MCF 10A (cell line): ENCODE measurements at regions of chr17 and their contacts with region 1.

Region 1: DNA sequence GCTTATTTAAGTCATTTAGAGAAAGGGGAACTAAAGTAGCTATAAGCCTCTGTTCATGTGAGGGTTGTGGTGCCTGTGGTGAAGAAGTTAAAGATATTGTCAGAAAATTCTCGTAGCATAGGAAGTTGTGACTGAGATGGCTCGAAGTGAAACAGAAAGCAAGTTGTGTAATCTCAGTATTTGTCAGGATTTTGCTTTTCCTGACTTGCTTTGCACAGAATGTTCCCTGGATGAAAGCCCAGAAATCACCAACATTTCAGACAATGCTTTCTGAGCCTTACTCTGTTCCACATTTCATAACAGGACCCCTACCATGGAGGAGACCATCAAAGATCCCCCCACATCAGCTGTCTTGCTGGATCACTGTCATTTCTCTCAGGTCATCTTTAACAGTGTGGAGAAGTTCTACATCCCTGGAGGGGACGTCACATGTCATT is 10.6 kb downstream of the CALCOCO2 start:
- DNase-seq: peak; percentile 66
- H3K4me3 Mint-ChIP-seq: peak overlapping the region; percentile 72
- H3K27ac Mint-ChIP-seq: peak overlapping the region; percentile 90
- H3K4me1 Mint-ChIP-seq: peaks cover 28% of the 10 kb centered on the region
- H3K27me3 Mint-ChIP-seq: no peaks in the 10 kb centered on the region
- CTCF ChIP-seq: no peak

Region 2: DNA sequence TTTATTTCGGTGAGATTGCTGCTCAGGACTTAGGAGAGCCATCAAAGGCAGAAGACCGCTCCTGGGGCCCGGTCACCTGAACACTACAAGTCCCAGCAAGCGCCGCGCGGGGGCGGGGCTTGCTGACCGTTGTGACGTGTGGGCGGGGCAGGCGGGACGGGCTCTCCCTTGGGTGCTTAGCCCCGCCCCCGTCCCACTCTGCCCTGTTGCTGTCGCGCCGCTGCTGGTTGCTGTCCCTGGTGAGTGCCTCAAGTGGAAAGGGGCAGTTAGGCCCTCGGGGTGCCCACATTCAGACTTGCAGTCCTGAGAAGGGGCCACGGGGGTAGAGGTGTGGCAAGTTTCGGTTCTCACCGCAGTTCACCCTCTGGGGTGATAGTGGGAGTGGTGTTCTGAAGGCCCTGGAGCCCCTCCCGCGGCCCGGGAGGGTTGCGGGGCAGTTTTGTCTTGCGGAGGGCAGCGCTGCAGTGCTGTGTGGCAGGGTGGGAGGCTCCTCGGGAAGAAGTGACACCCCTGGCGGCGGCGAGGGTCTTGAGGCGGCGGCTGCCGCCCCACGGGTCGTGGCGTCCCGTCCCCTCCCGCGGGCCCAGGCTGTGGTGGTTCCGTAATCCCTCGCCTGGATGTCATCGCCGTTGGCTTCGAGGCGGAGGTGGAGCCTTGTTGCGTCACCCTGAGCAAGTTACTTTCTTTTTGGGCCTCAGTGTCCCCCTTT is 10.4 kb before region 1 on chr17 and contains the start of gene CALCOCO2:
- CTCF ChIA-PET with region 1: interaction called, 3 read pairs
- POLR2A ChIA-PET with region 1: interaction called, 14 read pairs
- intact Hi-C with region 1: no loop called
- DNase-seq: peak; percentile 95
- H3K4me3 Mint-ChIP-seq: peak within 1 kb of the TSS; percentile 94
- H3K27ac Mint-ChIP-seq: peak within 1 kb of the TSS; percentile 96
- H3K4me1 Mint-ChIP-seq: no peaks in the 10 kb centered on the region
- H3K27me3 Mint-ChIP-seq: no peaks in the 10 kb centered on the region
- CTCF ChIP-seq: no peak
- total RNA-seq, gene CALCOCO2: 96.1 and 113 TPM in 2 replicates

Region 3: DNA sequence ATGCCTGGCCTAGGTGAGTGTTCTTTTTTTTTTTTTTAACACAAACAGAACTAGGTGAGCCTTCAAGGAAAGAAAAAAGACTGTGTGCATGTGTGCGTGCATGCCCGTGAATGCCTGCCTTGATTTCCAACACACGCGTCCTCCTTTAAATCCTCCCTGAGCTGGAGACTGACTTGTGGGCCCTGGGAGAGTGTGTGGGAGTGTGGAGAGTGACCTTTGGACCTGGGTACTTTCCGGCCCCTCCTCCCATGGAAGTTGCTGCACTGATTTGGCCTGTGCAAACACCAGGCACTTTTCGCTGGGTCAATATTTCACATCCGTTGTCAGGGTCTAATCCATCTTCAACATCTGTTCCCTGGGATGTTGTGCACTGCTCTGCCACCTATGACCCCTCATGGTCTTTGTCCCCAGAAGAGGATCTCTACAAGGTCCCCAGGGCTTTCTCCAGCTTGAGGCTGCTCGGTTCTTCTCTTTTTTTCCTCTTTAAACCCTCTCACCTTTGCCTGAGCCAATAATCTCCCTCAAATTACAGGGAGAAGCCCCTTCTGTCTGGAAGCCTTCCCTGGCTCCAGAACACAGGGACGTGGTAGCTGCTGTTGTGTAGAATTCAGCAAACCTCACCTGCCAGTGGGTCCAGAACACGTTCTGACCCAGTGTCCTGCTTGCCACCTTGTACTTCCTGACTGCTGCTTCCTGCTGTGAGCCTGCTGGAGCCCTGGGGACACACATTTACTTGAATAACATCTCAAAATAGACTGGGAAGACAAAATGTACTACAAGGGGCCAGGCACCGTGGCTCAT is 30.3 kb after region 1 on chr17:
- CTCF ChIA-PET with region 1: interaction called, 3 read pairs
- POLR2A ChIA-PET with region 1: interaction called, 10 read pairs
- intact Hi-C with region 1: no loop called
- DNase-seq: no peak
- H3K4me3 Mint-ChIP-seq: no peak overlapping the region
- H3K27ac Mint-ChIP-seq: no peak overlapping the region
- H3K4me1 Mint-ChIP-seq: no peaks in the 10 kb centered on the region
- H3K27me3 Mint-ChIP-seq: no peaks in the 10 kb centered on the region
- CTCF ChIP-seq: no peak